Colonic mucosa (tissue), 4 donors: ENCODE measurements at regions of chr5 and their contacts with region 1.

Region 1: DNA sequence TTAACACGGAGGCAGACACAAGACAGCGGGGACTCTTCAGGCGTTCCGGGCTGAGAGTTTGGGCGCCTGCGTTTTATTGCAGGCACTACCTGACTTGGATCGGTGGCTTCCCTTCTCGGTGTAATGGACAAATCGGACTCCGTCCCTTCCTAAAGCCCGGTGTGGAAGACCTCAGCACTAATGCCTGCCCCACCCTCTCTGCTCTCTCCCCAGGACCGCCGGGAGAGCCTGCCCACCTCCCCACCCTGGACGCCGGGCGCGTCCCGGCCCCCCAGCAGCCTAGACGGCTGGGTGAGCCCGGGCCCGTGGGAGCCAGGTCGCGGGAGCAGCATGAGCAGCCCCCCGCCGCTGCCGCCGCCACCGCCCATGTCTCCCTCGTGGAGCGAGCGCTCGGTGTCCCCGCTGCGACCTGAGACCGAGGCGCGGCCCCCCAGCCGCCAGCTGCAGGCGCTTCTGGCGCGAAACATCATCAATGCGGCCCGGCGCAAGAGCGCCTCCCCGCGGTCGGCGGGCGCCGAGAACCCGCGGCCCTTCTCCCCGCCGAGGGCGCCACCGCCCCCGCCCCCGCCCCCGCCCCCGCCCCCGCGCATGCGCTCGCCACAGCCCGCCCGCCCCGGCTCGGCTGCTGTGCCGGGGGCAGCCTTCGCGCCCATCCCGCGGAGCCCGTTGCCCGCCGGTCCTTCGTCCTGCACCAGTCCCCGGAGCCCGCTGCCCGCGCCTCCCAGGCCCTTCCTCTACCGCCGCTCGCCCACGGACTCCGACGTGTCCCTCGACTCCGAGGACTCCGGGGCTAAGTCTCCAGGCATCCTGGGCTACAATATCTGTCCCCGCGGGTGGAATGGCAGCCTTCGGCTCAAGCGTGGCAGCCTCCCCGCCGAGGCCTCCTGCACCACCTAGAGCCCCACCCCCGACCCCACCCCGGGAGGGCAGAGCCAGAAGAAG is 4.6 kb upstream of the MYOZ3 start:
- DNase-seq: peak; percentile 79
- H3K4me3 ChIP-seq: peak overlapping the region; percentile 51
- H3K27ac ChIP-seq: no peak overlapping the region
- H3K4me1 ChIP-seq: no peaks in the 10 kb centered on the region
- H3K27me3 ChIP-seq: no peaks in the 10 kb centered on the region
- CTCF ChIP-seq: peak; percentile 36

Region 2: DNA sequence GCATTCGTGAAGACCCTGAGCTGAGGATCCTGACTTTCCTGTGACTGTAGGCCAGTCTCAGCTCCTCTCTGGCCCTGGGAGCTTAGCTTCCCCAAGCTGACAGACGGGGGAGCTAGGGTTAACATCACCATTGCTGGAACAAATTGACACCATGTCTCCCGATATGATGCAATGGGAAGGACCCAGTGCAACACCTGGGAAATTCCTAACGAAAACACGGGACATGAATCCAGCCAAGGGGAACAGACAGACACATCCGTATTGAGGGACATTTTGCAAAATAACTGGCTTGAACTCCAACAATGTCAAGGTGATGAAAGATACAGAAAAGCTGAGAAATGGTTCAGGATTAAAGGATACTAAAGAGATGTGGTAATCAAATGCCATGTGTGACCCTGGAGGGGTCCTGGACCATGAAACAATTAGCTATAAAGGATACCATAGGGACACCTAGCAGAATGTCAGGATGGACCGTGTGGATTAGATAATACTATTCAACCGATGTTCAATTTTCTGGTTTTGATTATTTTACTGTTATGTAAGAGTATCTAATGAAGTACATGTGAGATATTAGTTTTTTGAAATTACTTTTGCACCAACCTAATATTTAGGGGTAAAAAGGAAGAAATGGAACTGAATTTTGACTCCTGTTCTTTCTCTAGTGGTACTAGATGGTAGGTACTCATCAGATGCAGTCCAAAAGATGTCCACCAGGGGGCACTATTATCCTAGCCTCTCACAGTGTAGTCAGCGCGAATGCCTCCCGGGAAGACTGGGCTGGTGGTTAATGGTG is 95.9 kb before region 1 on chr5:
- intact Hi-C with region 1: loop called (anchors 2 kb)
- DNase-seq: peak; percentile 97
- H3K4me3 ChIP-seq: no peak overlapping the region
- H3K27ac ChIP-seq: no peak overlapping the region
- H3K4me1 ChIP-seq: no peaks in the 10 kb centered on the region
- H3K27me3 ChIP-seq: no peaks in the 10 kb centered on the region
- CTCF ChIP-seq: peak; percentile 89